ENCODE measurements at regions of chr7 and their contacts with region 1.

Region 1: GRCh38 chr7:13603661-13604060 is 385.8 kb downstream of the ETV1 start:
- DNase-seq: no peak
- H3K4me3 ChIP-seq: no peak overlapping the region
- H3K27ac ChIP-seq: no peak overlapping the region
- H3K4me1 ChIP-seq: no peaks in the 10 kb centered on the region
- H3K27me3 ChIP-seq: no peaks in the 10 kb centered on the region
- CTCF ChIP-seq: no peak

Region 2: GRCh38 chr7:13581097-13581496 is 22.6 kb before region 1 on chr7:
- CTCF ChIA-PET with region 1: no interaction called
- POLR2A ChIA-PET with region 1: no interaction called
- intact Hi-C with region 1: no loop called
- DNase-seq: no peak
- H3K4me3 ChIP-seq: no peak overlapping the region
- H3K27ac ChIP-seq: no peak overlapping the region
- H3K4me1 ChIP-seq: no peaks in the 10 kb centered on the region
- H3K27me3 ChIP-seq: no peaks in the 10 kb centered on the region
- CTCF ChIP-seq: no peak

Region 3: DNA sequence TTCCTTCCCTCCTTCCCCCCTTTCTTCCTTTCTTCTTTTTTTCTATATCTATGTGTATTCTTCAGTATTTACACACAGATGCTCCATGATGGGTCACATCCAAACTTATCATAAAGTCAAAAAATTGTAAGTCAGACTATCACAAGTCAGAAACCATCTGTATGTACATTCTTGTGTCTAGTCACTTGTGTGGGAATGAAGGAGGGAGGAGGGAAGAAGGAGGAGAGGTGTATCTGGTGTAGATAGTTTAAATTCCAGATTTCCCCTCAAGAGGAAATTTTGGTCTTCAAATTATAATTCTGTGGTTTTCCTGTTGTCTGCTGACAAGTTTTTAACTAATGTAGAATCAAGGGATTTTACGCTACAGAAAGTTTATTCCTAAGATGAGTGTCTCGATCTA is 98.6 kb after region 1 on chr7:
- CTCF ChIA-PET with region 1: no interaction called
- POLR2A ChIA-PET with region 1: interaction called, 14 read pairs
- intact Hi-C with region 1: no loop called
- DNase-seq: peak; percentile 34
- H3K4me3 ChIP-seq: no peak overlapping the region
- H3K27ac ChIP-seq: no peak overlapping the region
- H3K4me1 ChIP-seq: peaks cover 9% of the 10 kb centered on the region
- H3K27me3 ChIP-seq: no peaks in the 10 kb centered on the region
- CTCF ChIP-seq: no peak

Measured in A673 (cell line).